CD8-positive, alpha-beta T cell (primary cell): ENCODE measurements at regions of chr2 and their contacts with region 1.

Region 1: GRCh38 chr2:28958689-28959088 is 22.4 kb upstream of the TOGARAM2 start:
- DNase-seq: peak in 8 of 9 experiments; percentile 15 to 78 (median 37)
- ATAC-seq: peak; percentile 56
- H3K4me3 ChIP-seq: no peak overlapping the region
- H3K4me3 Mint-ChIP-seq: no peak overlapping the region
- H3K27ac ChIP-seq: no peak overlapping the region
- H3K27ac Mint-ChIP-seq: no peak overlapping the region
- H3K4me1 ChIP-seq: no peaks in the 10 kb centered on the region
- H3K4me1 Mint-ChIP-seq: peaks cover 8% of the 10 kb centered on the region
- H3K27me3 ChIP-seq: no peaks in the 10 kb centered on the region
- H3K27me3 Mint-ChIP-seq: no peaks in the 10 kb centered on the region
- CTCF ChIP-seq: peak; percentile 75

Region 2: DNA sequence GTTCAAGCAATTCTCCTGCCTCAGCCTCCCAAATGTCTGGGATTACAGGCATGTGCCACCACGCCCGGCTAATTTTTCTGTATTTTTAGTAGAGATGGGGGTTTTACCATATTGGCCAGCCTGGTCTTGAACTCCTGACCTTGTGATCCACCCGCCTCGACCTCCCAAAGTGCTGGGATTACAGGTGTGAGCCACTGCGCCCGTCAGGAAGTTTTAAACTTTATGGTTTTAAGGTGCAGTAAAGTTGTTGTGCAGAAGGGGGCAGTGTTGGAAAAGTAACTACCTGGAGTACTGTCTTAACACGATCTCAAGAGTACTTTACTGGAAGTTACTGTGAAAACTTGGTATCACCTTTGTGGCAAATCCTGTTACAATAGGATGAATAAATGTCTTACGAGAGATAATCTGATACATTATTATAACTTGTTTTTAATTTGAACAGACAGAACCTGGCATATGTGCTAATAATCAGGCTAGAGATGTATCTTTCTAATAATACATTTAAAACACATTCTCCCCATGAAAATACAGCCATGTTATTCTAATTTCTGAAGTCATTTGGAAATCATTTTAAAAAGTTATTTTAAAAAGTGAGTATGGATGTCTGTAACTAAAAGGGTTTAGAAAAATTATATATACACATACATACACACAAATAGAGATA is 137.3 kb before region 1 on chr2:
- CTCF ChIA-PET with region 1: no interaction called
- POLR2A ChIA-PET with region 1: no interaction called
- intact Hi-C with region 1: loop called (anchors 1 to 5 kb)
- DNase-seq: peak in 8 of 9 experiments; percentile 20 to 82 (median 62)
- ATAC-seq: peak; percentile 92
- H3K4me3 ChIP-seq: no peak overlapping the region
- H3K4me3 Mint-ChIP-seq: no peak overlapping the region
- H3K27ac ChIP-seq: no peak overlapping the region
- H3K27ac Mint-ChIP-seq: no peak overlapping the region
- H3K4me1 ChIP-seq: peaks cover 5% of the 10 kb centered on the region
- H3K4me1 Mint-ChIP-seq: peaks cover 4% of the 10 kb centered on the region
- H3K27me3 ChIP-seq: no peaks in the 10 kb centered on the region
- H3K27me3 Mint-ChIP-seq: no peaks in the 10 kb centered on the region
- CTCF ChIP-seq: peak; percentile 79

Region 3: DNA sequence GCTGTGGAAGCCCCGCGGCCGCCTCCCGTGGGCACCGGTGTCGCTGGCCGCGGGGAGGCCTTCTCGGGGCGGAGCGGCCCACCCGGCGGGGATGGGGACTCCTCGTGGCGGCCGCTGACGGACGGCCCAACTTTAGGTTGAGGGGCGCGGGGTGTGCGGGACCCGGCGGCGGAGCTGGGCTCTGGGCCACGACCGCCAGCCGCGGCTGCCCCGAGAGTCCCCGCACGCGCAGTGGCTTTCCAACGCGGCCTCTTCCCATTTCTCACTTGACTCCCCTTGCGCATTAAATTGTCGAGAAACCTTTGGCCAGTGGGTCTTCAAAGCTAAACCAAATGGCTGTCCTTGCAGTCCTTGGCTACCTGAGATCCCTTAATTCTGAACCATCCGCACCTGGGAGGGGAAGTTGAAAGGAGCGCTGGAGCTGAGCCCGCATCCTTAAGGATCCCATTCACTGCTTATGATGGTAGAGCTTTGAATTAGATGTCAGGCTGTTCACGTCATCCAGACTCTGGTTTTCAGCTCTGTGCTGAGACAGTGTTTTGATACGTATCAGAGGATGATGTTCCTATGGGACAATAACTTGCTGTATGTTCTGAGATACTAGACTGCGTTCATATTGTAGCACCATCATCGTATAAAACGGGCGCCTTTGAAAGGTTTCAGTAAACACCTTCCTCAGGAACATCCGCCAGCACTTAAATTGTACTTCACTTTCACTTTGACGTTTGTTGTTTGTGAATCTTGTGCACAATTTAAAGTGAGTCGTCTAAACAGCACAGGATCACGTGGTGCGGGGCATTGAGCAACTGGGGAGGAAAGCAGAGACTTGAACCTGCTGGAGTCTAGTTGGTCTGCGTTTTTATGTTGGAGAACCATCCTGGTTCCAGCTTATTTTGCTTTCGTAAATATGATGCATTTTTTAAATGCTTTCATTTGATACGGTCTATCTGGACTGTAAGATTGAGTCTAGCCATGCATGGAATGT is 157.4 kb after region 1 on chr2:
- CTCF ChIA-PET with region 1: interaction called, 7 read pairs
- POLR2A ChIA-PET with region 1: interaction called, 3 read pairs
- intact Hi-C with region 1: loop called (anchors 5 kb)
- DNase-seq: peak; percentile 43 to 89 (median 73)
- ATAC-seq: peak; percentile 59
- H3K4me3 ChIP-seq: peak overlapping the region; percentile 80 to 82
- H3K4me3 Mint-ChIP-seq: peak overlapping the region; percentile 91
- H3K27ac ChIP-seq: peak overlapping the region; percentile 86 to 92
- H3K27ac Mint-ChIP-seq: peak overlapping the region; percentile 95
- H3K4me1 ChIP-seq: peaks cover 39% of the 10 kb centered on the region
- H3K4me1 Mint-ChIP-seq: peaks cover 54% of the 10 kb centered on the region
- H3K27me3 ChIP-seq: no peaks in the 10 kb centered on the region
- H3K27me3 Mint-ChIP-seq: no peaks in the 10 kb centered on the region
- CTCF ChIP-seq: no peak

Region 4: DNA sequence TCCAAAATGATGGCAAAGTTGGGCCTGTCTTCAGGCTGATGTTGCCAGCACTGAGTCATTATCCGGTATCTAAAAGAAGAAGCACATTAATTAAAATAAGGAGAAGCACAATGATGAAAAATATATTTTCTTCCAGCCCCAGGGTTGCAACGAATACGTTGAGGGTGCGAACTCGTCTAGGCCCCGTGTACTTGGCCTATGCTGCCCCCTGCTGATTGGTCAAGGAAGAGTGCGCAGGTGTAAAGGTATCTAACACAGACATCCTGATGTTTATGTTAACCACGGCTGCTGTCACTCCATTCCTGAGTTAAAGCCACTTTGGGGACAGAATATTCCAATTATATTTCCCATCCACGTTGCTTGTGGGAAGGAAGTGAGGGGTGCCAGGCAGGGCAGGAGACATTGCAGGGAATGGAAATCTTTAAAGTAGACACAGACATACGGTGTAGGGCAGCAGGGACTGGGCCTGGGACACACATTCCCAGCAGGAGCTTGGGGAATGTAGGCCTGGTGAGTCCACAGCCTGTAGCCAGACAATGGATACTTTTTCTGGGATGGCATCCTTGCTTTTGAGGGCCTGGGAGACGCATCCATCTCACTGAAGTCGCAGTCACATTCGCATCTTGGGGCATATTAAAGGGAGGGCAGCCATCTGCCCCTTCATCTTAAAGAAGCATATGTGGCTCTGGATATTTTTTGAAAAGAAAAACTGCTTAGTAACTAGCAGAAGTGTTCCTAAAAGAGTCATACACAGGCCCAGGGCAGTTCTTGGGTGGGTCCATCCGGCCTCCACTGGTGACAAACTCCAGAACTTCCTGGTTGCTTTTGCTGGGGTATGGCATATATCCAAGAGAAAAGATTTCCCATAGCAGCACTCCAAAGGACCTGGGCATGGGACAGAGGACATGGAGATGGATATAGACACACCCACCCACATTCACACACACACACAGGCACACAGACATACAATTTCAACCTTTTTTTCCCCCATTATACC is 238.4 kb after region 1 on chr2:
- CTCF ChIA-PET with region 1: interaction called, 13 read pairs
- POLR2A ChIA-PET with region 1: no interaction called
- intact Hi-C with region 1: loop called (anchors 1 kb)
- DNase-seq: peak; percentile 59 to 83 (median 79)
- ATAC-seq: peak; percentile 98
- H3K4me3 ChIP-seq: no peak overlapping the region
- H3K4me3 Mint-ChIP-seq: no peak overlapping the region
- H3K27ac ChIP-seq: no peak overlapping the region
- H3K27ac Mint-ChIP-seq: no peak overlapping the region
- H3K4me1 ChIP-seq: no peaks in the 10 kb centered on the region
- H3K4me1 Mint-ChIP-seq: peaks cover 7% of the 10 kb centered on the region
- H3K27me3 ChIP-seq: no peaks in the 10 kb centered on the region
- H3K27me3 Mint-ChIP-seq: no peaks in the 10 kb centered on the region
- CTCF ChIP-seq: peak; percentile 87

Region 5: DNA sequence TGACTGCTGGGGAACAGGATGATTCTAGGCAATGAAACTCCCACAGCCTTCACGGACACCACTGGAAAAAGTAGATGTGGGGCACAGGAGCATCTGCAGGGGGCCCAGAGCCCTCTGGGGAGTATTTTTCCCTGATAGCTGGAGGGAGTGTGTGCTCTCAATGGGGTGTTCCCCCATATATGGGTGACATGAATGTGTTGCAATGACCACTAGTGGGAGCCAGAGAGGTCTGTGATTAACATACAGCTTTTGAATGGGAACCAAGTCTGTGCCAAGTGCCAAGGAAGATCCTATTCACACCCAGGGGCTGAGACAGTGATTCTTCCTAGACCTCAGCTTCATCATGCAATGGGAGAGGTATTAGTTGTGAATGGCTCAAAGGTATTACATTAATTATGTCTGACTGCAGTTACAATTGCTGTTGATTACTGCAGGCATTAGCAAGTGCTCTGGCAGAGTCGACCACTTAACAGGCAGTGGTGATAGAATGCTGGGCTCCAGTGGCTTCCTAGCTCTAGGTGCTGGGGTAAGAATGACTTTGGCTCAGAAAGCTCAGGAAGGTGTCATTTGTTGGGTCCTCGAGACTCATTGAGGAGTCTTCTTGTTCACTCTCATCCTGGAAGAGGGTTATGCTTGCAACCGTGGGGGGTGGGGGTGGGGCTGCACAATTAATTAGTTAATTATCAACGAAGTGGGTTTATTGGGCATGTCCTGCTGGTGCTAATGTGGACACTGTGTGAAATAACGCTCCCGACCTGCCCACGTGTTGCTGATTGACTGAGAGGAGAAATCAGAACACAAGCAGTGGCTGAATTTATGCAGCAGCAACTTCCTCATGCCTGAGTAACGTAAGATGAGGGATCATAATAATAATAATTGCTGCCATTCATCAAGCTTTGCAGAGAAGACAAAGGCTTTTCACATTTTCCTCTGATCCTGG is 350.7 kb after region 1 on chr2:
- CTCF ChIA-PET with region 1: no interaction called
- POLR2A ChIA-PET with region 1: no interaction called
- intact Hi-C with region 1: loop called in 1 of 2 experiments (anchors 5 kb)
- DNase-seq: peak in 7 of 9 experiments; percentile 10 to 67 (median 35)
- ATAC-seq: peak; percentile 40
- H3K4me3 ChIP-seq: no peak overlapping the region
- H3K4me3 Mint-ChIP-seq: no peak overlapping the region
- H3K27ac ChIP-seq: no peak overlapping the region
- H3K27ac Mint-ChIP-seq: no peak overlapping the region
- H3K4me1 ChIP-seq: peaks cover 4% of the 10 kb centered on the region
- H3K4me1 Mint-ChIP-seq: peaks cover 11% of the 10 kb centered on the region
- H3K27me3 ChIP-seq: no peaks in the 10 kb centered on the region
- H3K27me3 Mint-ChIP-seq: peaks cover 24% of the 10 kb centered on the region
- CTCF ChIP-seq: peak; percentile 59

Region 6: DNA sequence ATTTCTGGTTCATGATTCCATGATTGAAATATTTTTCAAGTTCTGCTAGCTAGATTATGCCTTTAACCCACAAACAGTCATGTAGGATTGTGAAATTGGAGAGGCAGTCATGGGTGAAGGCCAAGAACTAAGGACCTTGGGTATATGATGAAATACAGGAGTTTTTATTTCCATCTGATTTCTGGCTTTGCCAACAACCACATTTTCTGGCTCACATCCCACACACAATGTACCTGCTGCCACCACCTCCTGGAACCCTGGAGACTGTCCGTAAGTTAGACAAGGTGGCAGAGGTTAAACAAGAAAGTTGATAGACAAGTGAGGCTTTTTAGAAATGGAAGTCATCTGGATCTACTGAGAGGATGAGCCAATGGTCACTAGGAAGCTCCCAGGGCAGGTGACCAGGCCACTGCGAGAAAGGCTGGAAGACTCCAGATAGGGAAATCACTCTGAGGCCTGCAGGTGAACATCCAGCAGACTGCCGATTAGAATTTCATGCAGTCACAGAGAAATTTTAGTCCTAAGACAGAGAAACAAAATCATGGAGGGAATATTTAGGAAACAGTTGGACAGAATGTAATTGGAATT is 560.7 kb after region 1 on chr2:
- CTCF ChIA-PET with region 1: no interaction called
- POLR2A ChIA-PET with region 1: no interaction called
- intact Hi-C with region 1: no loop called
- DNase-seq: no peak
- ATAC-seq: no peak
- H3K4me3 ChIP-seq: no peak overlapping the region
- H3K4me3 Mint-ChIP-seq: no peak overlapping the region
- H3K27ac ChIP-seq: no peak overlapping the region
- H3K27ac Mint-ChIP-seq: no peak overlapping the region
- H3K4me1 ChIP-seq: no peaks in the 10 kb centered on the region
- H3K4me1 Mint-ChIP-seq: peaks cover 4% of the 10 kb centered on the region
- H3K27me3 ChIP-seq: peaks cover 0 to 2% of the 10 kb centered on the region in 2 experiments
- H3K27me3 Mint-ChIP-seq: peaks cover 13% of the 10 kb centered on the region
- CTCF ChIP-seq: no peak

Region 7: DNA sequence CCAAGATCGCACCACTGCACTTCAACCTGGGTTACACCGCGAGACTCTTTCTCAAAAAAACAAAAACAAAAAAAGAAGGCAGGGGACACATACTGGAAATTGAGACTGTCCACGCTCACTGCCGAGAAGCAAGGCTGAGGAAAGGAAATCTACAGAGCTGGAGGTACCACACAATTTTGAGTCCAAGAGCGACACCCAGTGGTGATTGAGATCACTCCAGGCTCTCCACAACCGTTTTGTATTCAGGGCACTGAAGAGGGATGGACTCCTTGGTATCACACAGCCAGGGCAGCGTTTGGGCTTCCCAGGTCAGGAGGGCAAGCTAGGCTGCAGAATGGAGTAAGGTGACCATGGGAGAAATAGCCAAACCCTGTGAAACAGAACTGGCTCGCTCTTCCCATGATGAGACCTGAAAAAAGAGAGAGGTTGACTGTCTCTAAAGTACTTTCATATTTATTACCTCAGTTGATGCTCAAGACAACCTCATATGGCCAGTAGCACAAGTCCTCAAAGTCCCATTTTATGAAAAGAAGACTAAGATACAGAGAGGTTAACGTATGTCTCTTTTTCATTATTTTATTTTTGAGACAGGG is 1113.7 kb after region 1 on chr2:
- CTCF ChIA-PET with region 1: no interaction called
- POLR2A ChIA-PET with region 1: no interaction called
- intact Hi-C with region 1: loop called in 1 of 2 experiments (anchors 5 kb)
- DNase-seq: peak in 8 of 9 experiments; percentile 25 to 72 (median 53)
- ATAC-seq: peak; percentile 85
- H3K4me3 ChIP-seq: no peak overlapping the region
- H3K4me3 Mint-ChIP-seq: no peak overlapping the region
- H3K27ac ChIP-seq: no peak overlapping the region
- H3K27ac Mint-ChIP-seq: no peak overlapping the region
- H3K4me1 ChIP-seq: no peaks in the 10 kb centered on the region
- H3K4me1 Mint-ChIP-seq: no peaks in the 10 kb centered on the region
- H3K27me3 ChIP-seq: no peaks in the 10 kb centered on the region
- H3K27me3 Mint-ChIP-seq: peaks cover 53% of the 10 kb centered on the region
- CTCF ChIP-seq: peak; percentile 57